WTC11 (cell line): ENCODE measurements at regions of chr19 and their contacts with region 1.

Region 1: DNA sequence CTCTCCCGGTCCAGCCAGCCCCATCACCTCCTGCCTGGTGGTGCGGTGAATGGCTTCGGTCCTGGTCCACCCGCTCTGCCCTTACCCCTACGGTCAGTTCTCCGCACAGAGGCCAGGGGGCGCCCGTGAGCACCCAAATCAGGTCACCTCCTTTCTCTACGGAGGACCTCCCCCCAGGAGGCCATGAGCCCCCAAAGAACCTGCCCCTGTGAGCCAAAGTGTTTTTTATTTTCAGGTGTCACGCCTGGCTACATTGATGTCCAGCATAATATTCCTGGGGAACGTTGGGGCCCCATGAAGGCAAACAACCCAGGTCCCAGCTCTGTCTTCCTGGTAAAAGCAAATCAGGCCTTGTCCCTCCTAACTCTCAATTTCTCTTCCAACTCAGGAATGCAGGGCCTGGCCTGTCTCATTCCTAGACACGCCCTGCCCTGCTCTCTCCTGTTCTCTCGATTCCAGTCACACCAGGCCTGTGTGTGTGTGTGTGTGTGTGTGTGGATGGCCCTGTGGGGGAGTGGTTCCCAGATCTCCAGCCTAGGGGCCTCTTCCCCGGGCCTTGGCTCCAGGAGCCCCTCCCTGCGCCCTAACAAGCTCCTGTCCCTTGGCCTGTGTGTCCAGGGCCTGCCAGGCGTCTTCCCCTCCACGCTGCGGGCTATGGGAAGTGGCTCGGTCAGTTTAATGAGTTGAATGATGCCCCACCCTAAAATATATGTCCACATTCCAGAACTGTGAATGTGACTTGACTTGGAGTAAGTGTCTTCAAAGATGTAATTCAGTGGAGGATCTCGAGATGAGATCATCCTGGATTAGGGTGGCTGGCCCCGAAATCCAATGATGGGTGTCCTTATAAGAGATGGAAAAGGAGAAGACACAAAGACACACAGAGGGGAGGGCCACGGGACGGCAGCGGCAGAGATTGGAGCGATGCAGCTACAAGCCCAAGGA is 9.8 kb upstream of the GIPC1 start:
- DNase-seq: peak; percentile 91
- ATAC-seq: peak; percentile 97
- H3K4me3 Mint-ChIP-seq: no peak overlapping the region
- H3K27ac Mint-ChIP-seq: no peak overlapping the region
- H3K4me1 Mint-ChIP-seq: peaks cover 6% of the 10 kb centered on the region
- H3K27me3 Mint-ChIP-seq: peaks cover 8% of the 10 kb centered on the region; the same call in 1 of the 2 replicates
- CTCF ChIP-seq: peak; percentile 96

Region 2: DNA sequence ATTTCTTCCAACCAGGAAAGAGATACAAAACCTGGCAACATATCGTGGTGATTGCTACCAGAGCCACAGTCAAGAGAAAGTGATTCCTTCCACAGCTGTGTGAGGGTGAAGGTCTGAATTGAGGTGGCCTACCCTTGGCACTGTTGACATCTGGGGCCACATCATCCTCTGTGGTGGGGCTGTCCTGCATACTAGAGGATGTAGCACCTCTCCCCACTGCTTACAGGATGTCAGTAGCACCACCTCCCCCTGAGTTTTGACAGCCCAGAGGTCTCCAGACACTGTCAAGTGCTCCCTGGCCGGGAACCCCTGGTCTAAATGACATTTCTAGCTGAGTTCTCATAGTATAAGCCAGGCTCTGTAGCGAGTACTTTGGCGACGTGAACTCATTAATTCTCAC is 46.1 kb before region 1 on chr19:
- CTCF ChIA-PET with region 1: no interaction called
- POLR2A ChIA-PET with region 1: no interaction called
- DNase-seq: no peak
- ATAC-seq: no peak
- H3K4me3 Mint-ChIP-seq: no peak overlapping the region
- H3K27ac Mint-ChIP-seq: no peak overlapping the region
- H3K4me1 Mint-ChIP-seq: no peaks in the 10 kb centered on the region
- H3K27me3 Mint-ChIP-seq: no peaks in the 10 kb centered on the region
- CTCF ChIP-seq: no peak

Region 3: GRCh38 chr19:14517840-14518505 is 12.2 kb after region 1 on chr19 and contains the start of gene DNAJB1:
- CTCF ChIA-PET with region 1: interaction called, 34 read pairs
- POLR2A ChIA-PET with region 1: interaction called, 6 read pairs
- DNase-seq: peak; percentile 58
- ATAC-seq: peak; percentile 77
- H3K4me3 Mint-ChIP-seq: peak within 1 kb of the TSS; percentile 92
- H3K27ac Mint-ChIP-seq: peak within 1 kb of the TSS; percentile 94
- H3K4me1 Mint-ChIP-seq: peaks cover 27% of the 10 kb centered on the region
- H3K27me3 Mint-ChIP-seq: no peaks in the 10 kb centered on the region
- CTCF ChIP-seq: no peak
- total RNA-seq, gene DNAJB1: 54.5 to 88.7 TPM (median 81.9 TPM) in 3 replicates

Region 4: DNA sequence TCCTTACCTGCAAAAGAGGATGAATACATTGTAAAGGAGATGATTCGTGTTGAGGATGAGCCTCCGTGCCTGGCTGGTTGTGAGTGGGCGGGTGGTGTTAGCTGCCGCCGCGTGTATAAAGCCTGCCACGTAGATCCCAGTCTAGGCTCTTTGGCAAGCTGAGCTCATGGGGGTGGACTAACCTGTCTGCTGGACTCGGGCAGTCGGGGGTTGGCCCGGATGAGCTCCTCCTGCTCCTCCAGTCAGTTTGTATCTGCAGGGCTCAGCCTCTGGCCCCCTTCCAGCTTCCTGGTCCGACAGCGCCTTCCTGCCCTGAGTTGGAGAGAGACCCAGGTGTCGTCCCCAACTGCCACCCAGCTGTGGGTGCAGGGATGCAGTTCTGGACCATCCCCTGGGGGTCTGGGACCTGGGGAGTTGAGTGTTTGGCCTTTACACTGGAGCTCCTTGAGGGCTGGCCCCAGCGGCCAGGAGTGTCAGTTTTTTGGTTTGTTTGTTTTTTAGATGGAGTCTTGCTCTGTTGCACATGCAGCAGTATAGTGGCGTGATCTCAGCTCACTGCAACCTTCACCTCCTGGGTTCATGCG is 44.5 kb after region 1 on chr19:
- CTCF ChIA-PET with region 1: interaction called, 12 read pairs
- POLR2A ChIA-PET with region 1: interaction called, 5 read pairs
- DNase-seq: no peak
- ATAC-seq: no peak
- H3K4me3 Mint-ChIP-seq: no peak overlapping the region
- H3K27ac Mint-ChIP-seq: peak overlapping the region; percentile 67
- H3K4me1 Mint-ChIP-seq: peaks cover 12% of the 10 kb centered on the region
- H3K27me3 Mint-ChIP-seq: no peaks in the 10 kb centered on the region
- CTCF ChIP-seq: no peak

Region 5: DNA sequence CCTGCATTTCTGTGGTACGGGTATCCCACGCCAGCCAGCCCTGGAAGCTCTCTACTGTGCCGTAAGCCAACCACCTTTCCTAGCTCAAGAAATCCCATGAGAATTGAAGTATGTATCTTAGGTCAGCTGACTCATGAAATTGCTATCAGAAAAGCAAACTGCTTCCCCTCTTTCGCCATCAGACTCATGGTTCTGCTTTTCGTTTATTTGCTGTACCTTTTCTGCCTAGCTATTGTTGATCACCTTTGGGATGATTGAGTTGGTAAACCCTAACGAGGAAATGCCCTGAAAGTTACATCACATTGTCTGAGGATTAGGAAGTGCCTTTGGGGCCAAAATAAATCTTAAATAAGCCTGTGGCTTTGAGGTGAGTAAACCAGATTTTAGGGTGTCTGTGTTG is 169.0 kb after region 1 on chr19 and contains the start of gene ADGRE3:
- CTCF ChIA-PET with region 1: no interaction called
- POLR2A ChIA-PET with region 1: no interaction called
- DNase-seq: no peak
- ATAC-seq: no peak
- H3K4me3 Mint-ChIP-seq: no peak within 1 kb of the TSS
- H3K27ac Mint-ChIP-seq: no peak within 1 kb of the TSS
- H3K4me1 Mint-ChIP-seq: no peaks in the 10 kb centered on the region
- H3K27me3 Mint-ChIP-seq: peaks cover 24% of the 10 kb centered on the region
- CTCF ChIP-seq: no peak
- total RNA-seq, gene ADGRE3: not detected in 3 replicates